B cell (primary cell): ENCODE measurements at regions of chr22 and their contacts with region 1.

Region 1: DNA sequence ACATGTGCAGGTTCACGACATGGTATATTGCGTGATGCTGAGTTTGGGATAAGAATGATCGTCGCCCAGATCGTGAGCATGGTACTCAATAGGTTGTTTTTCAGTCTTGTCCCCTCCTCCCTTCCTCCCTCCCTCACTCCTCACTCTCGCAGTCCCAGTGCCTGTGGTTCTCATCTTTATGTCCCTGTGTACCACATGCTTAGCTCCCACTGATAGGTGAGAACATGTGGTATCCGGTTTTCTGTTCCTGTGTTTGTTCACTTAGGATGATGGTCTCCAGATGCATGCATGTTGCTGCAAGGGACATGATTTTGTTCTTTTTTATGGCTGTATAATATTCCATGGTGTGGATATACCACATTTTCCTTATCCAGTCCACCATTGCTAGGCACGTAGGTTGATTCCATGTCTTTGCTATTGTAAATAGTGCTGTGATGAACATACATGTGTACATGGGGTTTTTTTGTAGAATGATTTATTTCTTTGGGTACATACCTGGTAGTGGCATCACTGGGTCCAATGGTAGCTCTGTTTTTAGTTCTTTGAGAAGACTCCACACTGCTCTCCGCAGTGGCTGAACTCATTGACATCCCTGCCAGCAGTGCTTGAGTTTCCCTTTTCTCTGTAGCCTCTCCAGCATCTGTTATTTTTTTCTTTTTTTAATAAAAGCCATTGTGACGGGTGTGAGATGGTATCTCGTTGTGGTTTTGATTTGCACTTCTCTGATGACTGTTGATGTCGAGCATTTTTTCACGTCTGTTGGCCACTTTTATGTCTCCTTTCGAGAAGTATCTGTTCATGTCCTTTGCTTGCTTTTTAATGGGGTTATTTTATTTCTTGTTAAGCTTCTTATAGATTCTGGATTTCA is 16.4 kb downstream of the ZBED4 start:
- DNase-seq: no peak
- ATAC-seq: no peak
- H3K4me3 ChIP-seq: no peak overlapping the region
- H3K4me3 Mint-ChIP-seq: no peak overlapping the region
- H3K27ac ChIP-seq: no peak overlapping the region
- H3K27ac Mint-ChIP-seq: no peak overlapping the region
- H3K4me1 ChIP-seq: no peaks in the 10 kb centered on the region
- H3K4me1 Mint-ChIP-seq: peaks cover 10% of the 10 kb centered on the region
- H3K27me3 ChIP-seq: no peaks in the 10 kb centered on the region
- H3K27me3 Mint-ChIP-seq: no peaks in the 10 kb centered on the region
- CTCF ChIP-seq: no peak

Region 2: GRCh38 chr22:49992921-49993648 is 123.0 kb after region 1 on chr22:
- CTCF ChIA-PET with region 1: no interaction called
- POLR2A ChIA-PET with region 1: no interaction called
- intact Hi-C with region 1: no loop called
- DNase-seq: peak; percentile 82
- ATAC-seq: peak; percentile 96
- H3K4me3 ChIP-seq: no peak overlapping the region
- H3K4me3 Mint-ChIP-seq: peak overlapping the region; percentile 51
- H3K27ac ChIP-seq: no peak overlapping the region
- H3K27ac Mint-ChIP-seq: peak overlapping the region; percentile 82
- H3K4me1 ChIP-seq: peaks cover 11 to 24% of the 10 kb centered on the region in 2 donors
- H3K4me1 Mint-ChIP-seq: peaks cover 15% of the 10 kb centered on the region
- H3K27me3 ChIP-seq: no peaks in the 10 kb centered on the region
- H3K27me3 Mint-ChIP-seq: no peaks in the 10 kb centered on the region
- CTCF ChIP-seq: peak; percentile 87

Region 3: GRCh38 chr22:50049299-50050081 is 179.4 kb after region 1 on chr22:
- CTCF ChIA-PET with region 1: no interaction called
- POLR2A ChIA-PET with region 1: interaction called, 11 read pairs
- intact Hi-C with region 1: no loop called
- DNase-seq: no peak
- ATAC-seq: no peak
- H3K4me3 ChIP-seq: no peak overlapping the region
- H3K4me3 Mint-ChIP-seq: no peak overlapping the region
- H3K27ac ChIP-seq: no peak overlapping the region
- H3K27ac Mint-ChIP-seq: no peak overlapping the region
- H3K4me1 ChIP-seq: no peaks in the 10 kb centered on the region
- H3K4me1 Mint-ChIP-seq: peaks cover 6% of the 10 kb centered on the region
- H3K27me3 ChIP-seq: peaks cover 0 to 27% (median 2%) of the 10 kb centered on the region in 4 experiments
- H3K27me3 Mint-ChIP-seq: peaks cover 31% of the 10 kb centered on the region
- CTCF ChIP-seq: no peak